ENCODE measurements at regions of chr11 and their contacts with region 1.

Region 1: DNA sequence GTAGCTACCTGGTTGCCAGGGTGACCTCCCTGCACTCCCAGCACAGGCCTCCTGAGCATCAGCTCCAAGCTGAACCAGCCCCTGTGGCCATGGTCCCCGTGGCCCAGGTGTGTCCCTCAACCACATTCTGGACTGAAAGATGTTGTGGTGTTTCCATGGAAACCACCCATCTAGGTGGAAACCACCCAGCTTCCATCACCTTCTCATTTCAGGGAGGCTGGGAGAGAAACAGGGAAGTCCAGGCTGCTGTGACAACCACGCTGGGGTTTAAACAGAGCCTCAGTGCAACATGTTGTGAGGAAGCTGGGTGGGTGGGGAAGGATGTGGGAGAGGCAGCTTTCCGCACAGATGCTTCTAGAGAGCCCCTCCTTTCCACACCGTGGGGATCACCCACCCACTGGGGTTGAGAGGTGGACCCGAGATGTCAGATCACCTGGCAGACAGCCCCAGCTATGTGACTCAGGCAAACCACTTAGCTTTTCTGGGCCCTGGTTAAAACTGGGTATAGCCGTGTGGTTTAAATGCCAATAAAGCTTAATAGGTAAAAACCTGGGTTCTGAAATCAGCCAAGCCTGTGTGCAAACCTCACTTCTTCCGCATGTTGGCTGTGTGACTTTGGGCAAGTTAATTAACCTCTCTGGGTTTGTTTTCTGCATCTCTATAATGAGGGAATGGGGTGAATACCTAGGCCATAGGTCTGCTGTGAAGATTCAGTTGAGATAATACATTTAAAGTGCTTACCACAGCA is 46.4 kb downstream of the CD82 start:
- DNase-seq: no peak
- ATAC-seq: no peak
- H3K4me3 ChIP-seq: no peak overlapping the region
- H3K27ac ChIP-seq: no peak overlapping the region
- H3K4me1 ChIP-seq: no peaks in the 10 kb centered on the region
- H3K27me3 ChIP-seq: no peaks in the 10 kb centered on the region
- CTCF ChIP-seq: no peak

Region 2: GRCh38 chr11:44333271-44334218 is 278.3 kb before region 1 on chr11:
- CTCF ChIA-PET with region 1: no interaction called
- POLR2A ChIA-PET with region 1: no interaction called
- in situ Hi-C with region 1: no loop called
- intact Hi-C with region 1: no loop called
- DNase-seq: no peak
- ATAC-seq: peak; percentile 60; the same call in 1 of the 2 replicates
- H3K4me3 ChIP-seq: no peak overlapping the region
- H3K27ac ChIP-seq: no peak overlapping the region
- H3K4me1 ChIP-seq: no peaks in the 10 kb centered on the region
- H3K27me3 ChIP-seq: peaks cover 20% of the 10 kb centered on the region
- CTCF ChIP-seq: no peak

Region 3: DNA sequence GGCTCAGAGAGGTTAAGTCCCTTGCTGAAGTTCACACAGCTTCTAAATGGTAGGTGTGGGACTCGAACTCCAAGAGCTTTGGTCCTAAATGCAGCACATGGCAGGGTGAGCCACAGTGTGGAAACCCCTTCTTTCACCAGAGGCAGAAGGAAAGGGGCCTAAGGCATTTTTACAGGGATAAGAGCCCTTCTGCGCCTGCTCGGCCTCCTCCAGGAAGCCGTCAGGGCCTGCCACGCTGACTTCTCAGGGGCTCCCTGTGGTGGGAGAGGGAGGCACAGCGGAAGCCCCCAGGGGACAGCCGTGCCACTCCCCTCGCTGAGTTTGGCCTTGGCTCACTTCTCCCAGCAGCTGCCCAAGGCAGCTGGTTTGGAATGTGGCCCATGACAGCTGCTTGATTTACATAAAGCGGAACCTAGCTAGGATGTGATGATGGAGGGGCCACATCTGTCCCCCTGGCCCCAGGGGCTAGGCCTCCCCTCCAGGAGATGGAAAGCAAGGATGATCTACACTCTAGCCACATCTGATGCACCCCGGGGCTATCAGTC is 10.9 kb before region 1 on chr11:
- CTCF ChIA-PET with region 1: interaction called, 14 read pairs
- POLR2A ChIA-PET with region 1: no interaction called
- in situ Hi-C with region 1: no loop called
- intact Hi-C with region 1: no loop called
- DNase-seq: no peak
- ATAC-seq: no peak; the same call in 1 of the 2 replicates
- H3K4me3 ChIP-seq: no peak overlapping the region
- H3K27ac ChIP-seq: no peak overlapping the region
- H3K4me1 ChIP-seq: no peaks in the 10 kb centered on the region
- H3K27me3 ChIP-seq: no peaks in the 10 kb centered on the region
- CTCF ChIP-seq: no peak

Region 4: DNA sequence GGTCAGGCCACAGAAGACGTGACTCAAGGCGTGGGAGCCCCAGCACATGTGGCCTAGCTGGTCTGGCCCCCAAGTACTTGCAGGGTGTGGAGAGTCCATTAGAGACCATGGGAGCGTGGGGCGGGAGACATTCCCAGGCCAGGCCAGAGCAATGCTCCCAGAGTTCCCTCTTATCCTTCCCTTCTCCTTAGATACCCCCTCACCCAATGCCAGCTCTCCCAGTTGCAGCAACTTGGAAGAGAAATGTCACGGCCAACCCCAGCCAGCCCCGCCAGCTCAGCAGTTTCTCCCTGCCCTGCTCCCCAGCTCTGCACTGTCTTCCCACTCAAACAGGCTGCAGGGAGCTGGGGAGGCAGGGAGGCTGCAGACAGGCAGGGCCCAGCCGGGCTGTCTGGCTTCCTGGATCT is 49.5 kb after region 1 on chr11:
- CTCF ChIA-PET with region 1: no interaction called
- POLR2A ChIA-PET with region 1: no interaction called
- in situ Hi-C with region 1: no loop called
- intact Hi-C with region 1: no loop called
- DNase-seq: no peak
- ATAC-seq: no peak
- H3K4me3 ChIP-seq: no peak overlapping the region
- H3K27ac ChIP-seq: no peak overlapping the region
- H3K4me1 ChIP-seq: no peaks in the 10 kb centered on the region
- H3K27me3 ChIP-seq: peaks cover 4% of the 10 kb centered on the region; the same call in 1 of the 2 replicates
- CTCF ChIP-seq: no peak

Region 5: DNA sequence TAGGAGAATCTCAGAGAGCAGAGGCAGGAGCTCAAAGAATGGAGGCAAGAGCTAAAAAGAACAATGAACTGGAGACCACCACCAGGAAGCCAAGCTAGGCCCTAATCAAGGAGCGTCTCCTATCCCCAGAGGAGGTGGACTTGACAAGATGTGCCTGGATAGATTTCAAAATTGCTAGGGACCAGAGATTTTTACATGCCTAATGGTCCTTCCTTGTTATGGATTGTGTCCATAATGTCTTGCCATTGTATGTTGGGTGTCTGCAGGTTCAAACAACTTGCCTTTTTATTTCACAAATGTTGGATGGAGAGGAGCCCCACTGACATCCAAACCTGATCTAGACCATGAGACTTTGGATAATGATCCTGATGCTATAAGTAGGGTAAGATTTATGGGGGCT is 427.1 kb after region 1 on chr11:
- CTCF ChIA-PET with region 1: no interaction called
- POLR2A ChIA-PET with region 1: interaction called, 21 read pairs
- in situ Hi-C with region 1: no loop called
- intact Hi-C with region 1: no loop called
- DNase-seq: no peak
- ATAC-seq: no peak
- H3K4me3 ChIP-seq: no peak overlapping the region
- H3K27ac ChIP-seq: no peak overlapping the region
- H3K4me1 ChIP-seq: no peaks in the 10 kb centered on the region
- H3K27me3 ChIP-seq: no peaks in the 10 kb centered on the region; the same call in 1 of the 2 replicates
- CTCF ChIP-seq: no peak

Region 6: GRCh38 chr11:46404476-46405017 is 1792.7 kb after region 1 on chr11:
- CTCF ChIA-PET with region 1: interaction called, 18 read pairs
- POLR2A ChIA-PET with region 1: no interaction called
- in situ Hi-C with region 1: no loop called
- intact Hi-C with region 1: no loop called
- DNase-seq: no peak
- ATAC-seq: no peak
- H3K4me3 ChIP-seq: no peak overlapping the region
- H3K27ac ChIP-seq: no peak overlapping the region
- H3K4me1 ChIP-seq: peaks cover 4% of the 10 kb centered on the region; the same call in 1 of the 2 replicates
- H3K27me3 ChIP-seq: no peaks in the 10 kb centered on the region
- CTCF ChIP-seq: no peak

Measured in Panc1 (cell line).